CD8-positive, alpha-beta memory T cell (primary cell): ENCODE measurements at regions of chr7 and their contacts with region 1.

Region 1: DNA sequence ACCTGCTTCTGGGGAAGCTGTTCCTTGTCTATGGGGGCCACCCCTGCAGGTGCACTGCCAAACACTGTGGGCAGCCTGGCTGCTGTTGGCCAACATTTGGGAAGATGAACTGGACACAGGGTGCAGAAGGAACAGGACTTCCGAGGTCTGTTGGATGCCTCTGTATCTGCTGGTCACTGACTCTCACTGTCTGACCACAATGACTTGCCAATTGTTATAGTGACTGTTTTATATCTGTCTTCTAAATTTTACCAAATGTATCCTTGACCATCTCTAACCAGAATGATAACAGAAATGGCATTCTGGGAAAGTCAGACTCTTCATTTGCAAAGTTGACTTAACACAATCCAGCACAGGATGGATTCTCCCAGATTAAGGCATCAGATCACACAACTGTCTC is 214.0 kb upstream of the PRSS58 start:
- DNase-seq: no peak
- H3K4me3 ChIP-seq: no peak overlapping the region
- H3K4me3 Mint-ChIP-seq: no peak overlapping the region
- H3K27ac ChIP-seq: no peak overlapping the region
- H3K27ac Mint-ChIP-seq: no peak overlapping the region
- H3K4me1 ChIP-seq: peaks cover 43% of the 10 kb centered on the region
- H3K4me1 Mint-ChIP-seq: peaks cover 22 to 68% (median 52%) of the 10 kb centered on the region in 3 donors
- H3K27me3 ChIP-seq: no peaks in the 10 kb centered on the region
- H3K27me3 Mint-ChIP-seq: peaks cover 0 to 4% of the 10 kb centered on the region in 2 donors

Region 2: DNA sequence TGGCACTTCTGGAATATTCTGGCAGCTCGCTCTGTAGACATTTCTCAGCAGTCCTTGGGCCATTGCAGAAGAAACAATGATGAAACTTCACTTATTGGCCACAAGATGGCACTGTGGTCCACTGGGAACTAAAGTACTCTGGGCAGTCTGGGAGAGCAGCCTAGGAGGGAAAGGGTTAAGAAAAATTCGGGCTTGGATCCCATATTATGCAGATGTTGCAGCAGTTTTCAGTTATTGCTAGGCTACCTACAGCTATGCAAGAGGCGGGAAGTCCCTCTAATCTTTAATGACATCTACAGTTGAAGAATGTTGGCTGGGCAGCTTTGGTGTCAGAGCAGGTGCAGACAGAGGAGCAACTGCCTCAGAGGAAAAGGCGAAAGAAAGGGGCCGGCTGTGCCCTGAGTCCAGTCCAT is 12.3 kb before region 1 on chr7:
- CTCF ChIA-PET with region 1: interaction called, 55 read pairs
- POLR2A ChIA-PET with region 1: interaction called, 3 read pairs
- DNase-seq: peak in 2 of 5 donors; percentile 25 to 34
- H3K4me3 ChIP-seq: no peak overlapping the region
- H3K4me3 Mint-ChIP-seq: peak overlapping the region in 5 of 7 donors; percentile 21 to 70 (median 42)
- H3K27ac ChIP-seq: no peak overlapping the region
- H3K27ac Mint-ChIP-seq: peak overlapping the region in 5 of 8 donors; percentile 2 to 52 (median 47)
- H3K4me1 ChIP-seq: peaks cover 37% of the 10 kb centered on the region
- H3K4me1 Mint-ChIP-seq: peaks cover 36 to 60% (median 41%) of the 10 kb centered on the region in 3 donors
- H3K27me3 ChIP-seq: no peaks in the 10 kb centered on the region
- H3K27me3 Mint-ChIP-seq: peaks cover 5 to 13% of the 10 kb centered on the region in 2 donors